Caco-2 (cell line): ENCODE measurements at regions of chr2 and their contacts with region 1.

Region 1: DNA sequence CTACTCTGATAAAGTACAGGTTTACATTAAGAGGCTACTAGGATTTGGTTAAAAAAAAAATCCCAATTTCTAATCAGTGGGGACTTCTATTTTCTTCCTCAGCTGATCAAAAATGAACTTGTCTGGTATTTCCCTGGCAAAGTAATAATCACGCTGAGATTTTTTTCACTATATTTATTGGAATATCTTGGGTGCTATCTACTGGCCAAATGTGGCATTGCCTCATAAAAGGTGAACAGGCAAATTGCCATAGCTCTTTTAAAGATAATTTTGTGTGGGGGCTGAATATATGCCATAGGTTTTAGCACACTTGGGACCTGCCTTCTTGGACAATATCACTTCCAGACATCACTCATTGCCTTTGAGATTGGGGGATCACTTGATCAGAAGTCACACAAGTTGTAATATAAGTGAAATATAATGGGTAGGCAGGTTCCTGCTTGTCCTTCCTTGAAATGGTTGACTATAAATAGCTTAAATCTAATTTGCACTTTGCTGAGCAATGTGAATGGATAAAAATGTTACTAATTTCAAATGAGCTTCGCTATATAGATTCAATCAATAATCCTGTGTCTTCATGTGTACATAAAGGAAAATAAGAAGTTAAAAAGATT is 7.0 kb upstream of the NXPH2 start:
- DNase-seq: peak in 1 of 2 experiments; percentile 57
- H3K4me3 ChIP-seq: no peak overlapping the region
- H3K4me3 Mint-ChIP-seq: no peak overlapping the region
- H3K27ac Mint-ChIP-seq: no peak overlapping the region
- H3K4me1 ChIP-seq: 0 out of 2 replicates have a peak, but pooled peaks cover 6% of the 10 kb centered on the region
- H3K4me1 Mint-ChIP-seq: no peaks in the 10 kb centered on the region
- H3K27me3 ChIP-seq: no peaks in the 10 kb centered on the region
- H3K27me3 Mint-ChIP-seq: no peaks in the 10 kb centered on the region
- CTCF ChIP-seq: peak; percentile 71 to 82

Region 2: GRCh38 chr2:137888845-137889244 is 898.3 kb before region 1 on chr2:
- CTCF ChIA-PET with region 1: interaction called, 18 read pairs
- POLR2A ChIA-PET with region 1: no interaction called
- intact Hi-C with region 1: no loop called
- DNase-seq: peak; percentile 75 to 76
- H3K4me3 ChIP-seq: no peak overlapping the region
- H3K4me3 Mint-ChIP-seq: no peak overlapping the region
- H3K27ac Mint-ChIP-seq: no peak overlapping the region
- H3K4me1 ChIP-seq: peaks cover 12% of the 10 kb centered on the region
- H3K4me1 Mint-ChIP-seq: peaks cover 11% of the 10 kb centered on the region
- H3K27me3 ChIP-seq: no peaks in the 10 kb centered on the region
- H3K27me3 Mint-ChIP-seq: no peaks in the 10 kb centered on the region
- CTCF ChIP-seq: peak; percentile 69 to 81

Region 3: GRCh38 chr2:138180692-138181386 is 606.3 kb before region 1 on chr2:
- CTCF ChIA-PET with region 1: no interaction called
- POLR2A ChIA-PET with region 1: no interaction called
- intact Hi-C with region 1: loop called (anchors 5 kb)
- DNase-seq: peak in 1 of 2 experiments; percentile 28
- H3K4me3 ChIP-seq: no peak overlapping the region
- H3K4me3 Mint-ChIP-seq: no peak overlapping the region
- H3K27ac Mint-ChIP-seq: no peak overlapping the region
- H3K4me1 ChIP-seq: peaks cover 6% of the 10 kb centered on the region; the same call in 1 of the 2 replicates
- H3K4me1 Mint-ChIP-seq: peaks cover 21% of the 10 kb centered on the region
- H3K27me3 ChIP-seq: no peaks in the 10 kb centered on the region
- H3K27me3 Mint-ChIP-seq: no peaks in the 10 kb centered on the region
- CTCF ChIP-seq: peak; percentile 21 to 43

Region 4: DNA sequence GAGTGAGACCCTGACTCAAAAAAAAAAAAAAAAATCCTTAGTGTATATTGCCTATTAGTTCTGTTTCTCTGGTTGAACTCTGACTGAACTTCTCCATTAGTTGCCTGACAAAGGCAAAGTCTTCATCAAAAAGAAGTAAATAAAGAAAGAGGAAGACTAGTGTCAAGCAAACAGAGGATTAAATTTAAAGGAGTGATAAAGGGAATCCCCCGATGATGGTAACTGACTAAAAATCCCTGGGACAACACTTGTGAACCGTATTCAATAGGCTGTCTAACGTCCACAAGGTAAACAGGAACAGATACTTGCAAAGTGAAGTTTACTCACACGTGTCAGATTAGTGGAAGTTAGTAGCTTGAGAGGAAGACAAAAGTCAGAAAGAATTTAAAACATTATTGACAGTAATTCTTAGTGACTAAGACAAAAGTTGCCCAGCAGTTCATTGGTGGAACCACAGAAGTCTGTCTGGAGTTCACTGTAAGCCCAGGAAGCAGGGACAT is 311.8 kb before region 1 on chr2:
- CTCF ChIA-PET with region 1: interaction called, 3 read pairs
- POLR2A ChIA-PET with region 1: no interaction called
- intact Hi-C with region 1: loop called (anchors 1 kb)
- DNase-seq: no peak
- H3K4me3 ChIP-seq: no peak overlapping the region
- H3K4me3 Mint-ChIP-seq: no peak overlapping the region
- H3K27ac Mint-ChIP-seq: peak overlapping the region; percentile 17
- H3K4me1 ChIP-seq: peaks cover 6% of the 10 kb centered on the region; the same call in 1 of the 2 replicates
- H3K4me1 Mint-ChIP-seq: peaks cover 23% of the 10 kb centered on the region
- H3K27me3 ChIP-seq: no peaks in the 10 kb centered on the region
- H3K27me3 Mint-ChIP-seq: no peaks in the 10 kb centered on the region
- CTCF ChIP-seq: no peak

Region 5: GRCh38 chr2:138516030-138516704 is 271.0 kb before region 1 on chr2:
- CTCF ChIA-PET with region 1: no interaction called
- POLR2A ChIA-PET with region 1: no interaction called
- intact Hi-C with region 1: loop called (anchors 5 kb)
- DNase-seq: no peak
- H3K4me3 ChIP-seq: no peak overlapping the region
- H3K4me3 Mint-ChIP-seq: peak overlapping the region; percentile 42
- H3K27ac Mint-ChIP-seq: peak overlapping the region; percentile 62
- H3K4me1 ChIP-seq: peaks cover 35% of the 10 kb centered on the region
- H3K4me1 Mint-ChIP-seq: peaks cover 23% of the 10 kb centered on the region
- H3K27me3 ChIP-seq: no peaks in the 10 kb centered on the region
- H3K27me3 Mint-ChIP-seq: no peaks in the 10 kb centered on the region
- CTCF ChIP-seq: no peak

Region 6: GRCh38 chr2:138581909-138582308 is 205.3 kb before region 1 on chr2:
- CTCF ChIA-PET with region 1: no interaction called
- POLR2A ChIA-PET with region 1: no interaction called
- intact Hi-C with region 1: no loop called
- DNase-seq: no peak
- H3K4me3 ChIP-seq: no peak overlapping the region
- H3K4me3 Mint-ChIP-seq: no peak overlapping the region
- H3K27ac Mint-ChIP-seq: no peak overlapping the region
- H3K4me1 ChIP-seq: no peaks in the 10 kb centered on the region
- H3K4me1 Mint-ChIP-seq: peaks cover 7% of the 10 kb centered on the region
- H3K27me3 ChIP-seq: no peaks in the 10 kb centered on the region
- H3K27me3 Mint-ChIP-seq: no peaks in the 10 kb centered on the region
- CTCF ChIP-seq: no peak

Region 7: GRCh38 chr2:138665937-138666336 is 121.2 kb before region 1 on chr2:
- CTCF ChIA-PET with region 1: no interaction called
- POLR2A ChIA-PET with region 1: no interaction called
- intact Hi-C with region 1: no loop called
- DNase-seq: no peak
- H3K4me3 ChIP-seq: no peak overlapping the region
- H3K4me3 Mint-ChIP-seq: no peak overlapping the region
- H3K27ac Mint-ChIP-seq: no peak overlapping the region
- H3K4me1 ChIP-seq: no peaks in the 10 kb centered on the region
- H3K4me1 Mint-ChIP-seq: no peaks in the 10 kb centered on the region
- H3K27me3 ChIP-seq: no peaks in the 10 kb centered on the region
- H3K27me3 Mint-ChIP-seq: no peaks in the 10 kb centered on the region
- CTCF ChIP-seq: no peak

Region 8: GRCh38 chr2:138689705-138690104 is 97.5 kb before region 1 on chr2:
- CTCF ChIA-PET with region 1: interaction called, 3 read pairs
- POLR2A ChIA-PET with region 1: no interaction called
- intact Hi-C with region 1: loop called (anchors 1 kb)
- DNase-seq: no peak
- H3K4me3 ChIP-seq: no peak overlapping the region
- H3K4me3 Mint-ChIP-seq: no peak overlapping the region
- H3K27ac Mint-ChIP-seq: no peak overlapping the region
- H3K4me1 ChIP-seq: peaks cover 5% of the 10 kb centered on the region; the same call in 1 of the 2 replicates
- H3K4me1 Mint-ChIP-seq: no peaks in the 10 kb centered on the region
- H3K27me3 ChIP-seq: no peaks in the 10 kb centered on the region
- H3K27me3 Mint-ChIP-seq: no peaks in the 10 kb centered on the region
- CTCF ChIP-seq: no peak

Region 9: GRCh38 chr2:138827426-138828054 is 40.4 kb after region 1 on chr2:
- CTCF ChIA-PET with region 1: interaction called, 11 read pairs
- POLR2A ChIA-PET with region 1: no interaction called
- intact Hi-C with region 1: loop called (anchors 1 kb)
- DNase-seq: peak; percentile 46 to 60
- H3K4me3 ChIP-seq: no peak overlapping the region
- H3K4me3 Mint-ChIP-seq: no peak overlapping the region
- H3K27ac Mint-ChIP-seq: no peak overlapping the region
- H3K4me1 ChIP-seq: no peaks in the 10 kb centered on the region
- H3K4me1 Mint-ChIP-seq: no peaks in the 10 kb centered on the region
- H3K27me3 ChIP-seq: no peaks in the 10 kb centered on the region
- H3K27me3 Mint-ChIP-seq: peaks cover 4% of the 10 kb centered on the region
- CTCF ChIP-seq: peak; percentile 71 to 75

Region 10: GRCh38 chr2:138922973-138923563 is 135.9 kb after region 1 on chr2:
- CTCF ChIA-PET with region 1: no interaction called
- POLR2A ChIA-PET with region 1: no interaction called
- intact Hi-C with region 1: no loop called
- DNase-seq: no peak
- H3K4me3 ChIP-seq: no peak overlapping the region
- H3K4me3 Mint-ChIP-seq: no peak overlapping the region
- H3K27ac Mint-ChIP-seq: no peak overlapping the region
- H3K4me1 ChIP-seq: no peaks in the 10 kb centered on the region
- H3K4me1 Mint-ChIP-seq: no peaks in the 10 kb centered on the region
- H3K27me3 ChIP-seq: no peaks in the 10 kb centered on the region
- H3K27me3 Mint-ChIP-seq: no peaks in the 10 kb centered on the region
- CTCF ChIP-seq: peak in 1 of 2 experiments; percentile 57